ENCODE measurements at regions of chr10 and their contacts with region 1.

Region 1: GRCh38 chr10:11218395-11218794 is 200.7 kb downstream of the CELF2 start:
- DNase-seq: no peak
- ATAC-seq: peak; percentile 71 to 80 (median 78)
- H3K4me3 ChIP-seq: no peak overlapping the region
- H3K4me3 Mint-ChIP-seq: peak overlapping the region; percentile 0
- H3K27ac ChIP-seq: peak overlapping the region; percentile 13
- H3K27ac Mint-ChIP-seq: no peak overlapping the region
- H3K4me1 ChIP-seq: peaks cover 44% of the 10 kb centered on the region
- H3K4me1 Mint-ChIP-seq: peaks cover 95% of the 10 kb centered on the region in 2 donors
- H3K27me3 ChIP-seq: no peaks in the 10 kb centered on the region
- H3K27me3 Mint-ChIP-seq: no peaks in the 10 kb centered on the region
- CTCF ChIP-seq: no peak

Region 2: GRCh38 chr10:11204351-11204942 is 13.9 kb before region 1 on chr10:
- intact Hi-C with region 1: loop called (anchors 1 kb)
- DNase-seq: peak; percentile 46 to 66
- ATAC-seq: peak; percentile 44 to 69 (median 61)
- H3K4me3 ChIP-seq: no peak overlapping the region
- H3K4me3 Mint-ChIP-seq: peak overlapping the region; percentile 76
- H3K27ac ChIP-seq: peak overlapping the region; percentile 73
- H3K27ac Mint-ChIP-seq: no peak overlapping the region
- H3K4me1 ChIP-seq: peaks cover 73% of the 10 kb centered on the region
- H3K4me1 Mint-ChIP-seq: peaks cover 100% of the 10 kb centered on the region in 2 donors
- H3K27me3 ChIP-seq: no peaks in the 10 kb centered on the region
- H3K27me3 Mint-ChIP-seq: no peaks in the 10 kb centered on the region
- CTCF ChIP-seq: no peak

Region 3: GRCh38 chr10:11253385-11254002 is 35.1 kb after region 1 on chr10:
- intact Hi-C with region 1: loop called (anchors 5 kb)
- DNase-seq: no peak
- ATAC-seq: peak; percentile 41 to 59 (median 59)
- H3K4me3 ChIP-seq: no peak overlapping the region
- H3K4me3 Mint-ChIP-seq: peak overlapping the region; percentile 21
- H3K27ac ChIP-seq: peak overlapping the region; percentile 12
- H3K27ac Mint-ChIP-seq: peak overlapping the region in 1 of 2 donors; percentile 78
- H3K4me1 ChIP-seq: peaks cover 42% of the 10 kb centered on the region
- H3K4me1 Mint-ChIP-seq: peaks cover 78 to 82% of the 10 kb centered on the region in 2 donors
- H3K27me3 ChIP-seq: no peaks in the 10 kb centered on the region
- H3K27me3 Mint-ChIP-seq: no peaks in the 10 kb centered on the region
- CTCF ChIP-seq: no peak